Heart left ventricle (tissue), 16 donors: ENCODE measurements at regions of chr11 and their contacts with region 1.

Region 1: DNA sequence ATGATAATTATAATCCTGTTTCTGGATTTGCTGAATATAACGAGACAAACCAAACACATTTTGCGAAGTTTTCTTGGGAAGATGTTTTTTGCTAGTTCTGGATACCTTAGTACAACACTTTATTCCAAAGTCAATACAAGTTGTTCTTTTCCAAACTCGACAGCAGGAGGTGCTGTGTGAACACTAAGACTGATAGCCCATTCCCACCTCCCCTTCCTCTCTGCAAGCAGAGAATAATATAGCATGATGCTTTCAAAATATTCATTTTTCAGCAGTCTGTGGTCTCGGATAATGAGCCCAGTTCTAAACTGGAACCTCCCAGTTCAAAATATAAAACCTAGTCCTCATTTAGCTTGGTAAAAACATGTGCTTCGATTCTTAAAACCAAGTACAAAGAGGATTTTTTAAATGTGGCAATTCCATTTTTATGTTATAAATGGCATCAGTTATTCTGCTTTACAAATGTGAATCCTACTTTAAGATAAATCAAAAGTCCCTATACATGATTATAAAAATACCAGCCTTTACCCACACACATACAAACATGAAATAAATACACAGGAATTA is 129.1 kb downstream of the DCDC1 start:
- DNase-seq: no peak
- ATAC-seq: no peak
- H3K4me3 ChIP-seq: no peak overlapping the region
- H3K27ac ChIP-seq: no peak overlapping the region
- H3K4me1 ChIP-seq: no peaks in the 10 kb centered on the region
- H3K27me3 ChIP-seq: no peaks in the 10 kb centered on the region
- CTCF ChIP-seq: peak; percentile 22 to 63 (median 46)
- POLR2A ChIP-seq: no peak

Region 2: GRCh38 chr11:31351168-31351567 is 110.7 kb after region 1 on chr11:
- intact Hi-C with region 1: no loop called
- DNase-seq: no peak
- ATAC-seq: no peak
- H3K4me3 ChIP-seq: no peak overlapping the region
- H3K27ac ChIP-seq: no peak overlapping the region
- H3K4me1 ChIP-seq: no peaks in the 10 kb centered on the region
- H3K27me3 ChIP-seq: peaks cover 0 to 11% (median 0%) of the 10 kb centered on the region in 9 donors
- CTCF ChIP-seq: no peak
- POLR2A ChIP-seq: no peak

Region 3: GRCh38 chr11:31865606-31866300 is 625.3 kb after region 1 on chr11:
- intact Hi-C with region 1: loop called in 6 of 10 experiments (anchors 5 to 10 kb)
- DNase-seq: no peak
- ATAC-seq: no peak
- H3K4me3 ChIP-seq: no peak overlapping the region
- H3K27ac ChIP-seq: no peak overlapping the region
- H3K4me1 ChIP-seq: peaks cover 0 to 2% (median 0%) of the 10 kb centered on the region in 12 donors
- H3K27me3 ChIP-seq: peaks cover 0 to 47% (median 2%) of the 10 kb centered on the region in 9 donors
- CTCF ChIP-seq: no peak
- POLR2A ChIP-seq: no peak

Region 4: DNA sequence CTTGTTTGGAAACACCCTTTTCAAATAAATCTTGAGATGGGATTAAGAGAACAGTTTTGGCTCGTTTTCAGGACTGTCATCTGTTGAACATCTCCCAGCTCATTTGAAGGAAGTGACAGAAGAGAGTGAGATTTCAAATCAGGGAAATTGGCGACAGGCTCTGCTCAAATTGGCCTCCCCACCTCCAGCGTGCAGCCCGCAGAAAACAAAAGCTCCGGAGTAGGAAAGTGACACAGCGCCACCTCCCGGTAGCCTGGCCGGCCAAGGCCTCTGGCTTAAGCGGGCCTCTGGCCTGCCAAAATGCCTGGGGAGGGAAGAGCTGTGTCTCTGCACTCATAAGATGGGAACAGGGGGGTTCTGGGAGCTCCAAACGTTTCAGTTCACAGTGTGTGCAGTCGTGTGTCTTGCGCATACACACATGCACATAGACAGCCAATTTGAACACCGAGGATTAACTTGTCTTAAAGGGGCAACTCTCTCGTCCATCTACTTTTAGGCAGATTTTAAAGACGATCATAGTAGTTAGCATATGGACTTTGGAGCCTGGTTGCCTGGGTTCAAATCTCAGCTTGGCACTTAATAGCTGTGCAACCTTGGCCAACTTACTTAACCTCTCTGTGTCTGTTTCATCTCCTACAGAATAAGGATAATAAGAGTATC is 717.8 kb after region 1 on chr11:
- intact Hi-C with region 1: loop called in 1 of 10 experiments (anchors 5 kb)
- DNase-seq: peak; percentile 60 to 82 (median 63)
- ATAC-seq: peak; percentile 74 to 92 (median 81)
- H3K4me3 ChIP-seq: no peak overlapping the region
- H3K27ac ChIP-seq: no peak overlapping the region
- H3K4me1 ChIP-seq: peaks cover 0 to 5% (median 0%) of the 10 kb centered on the region in 12 donors
- H3K27me3 ChIP-seq: no peaks in the 10 kb centered on the region
- CTCF ChIP-seq: peak; percentile 64 to 86 (median 78)
- POLR2A ChIP-seq: no peak

Region 5: DNA sequence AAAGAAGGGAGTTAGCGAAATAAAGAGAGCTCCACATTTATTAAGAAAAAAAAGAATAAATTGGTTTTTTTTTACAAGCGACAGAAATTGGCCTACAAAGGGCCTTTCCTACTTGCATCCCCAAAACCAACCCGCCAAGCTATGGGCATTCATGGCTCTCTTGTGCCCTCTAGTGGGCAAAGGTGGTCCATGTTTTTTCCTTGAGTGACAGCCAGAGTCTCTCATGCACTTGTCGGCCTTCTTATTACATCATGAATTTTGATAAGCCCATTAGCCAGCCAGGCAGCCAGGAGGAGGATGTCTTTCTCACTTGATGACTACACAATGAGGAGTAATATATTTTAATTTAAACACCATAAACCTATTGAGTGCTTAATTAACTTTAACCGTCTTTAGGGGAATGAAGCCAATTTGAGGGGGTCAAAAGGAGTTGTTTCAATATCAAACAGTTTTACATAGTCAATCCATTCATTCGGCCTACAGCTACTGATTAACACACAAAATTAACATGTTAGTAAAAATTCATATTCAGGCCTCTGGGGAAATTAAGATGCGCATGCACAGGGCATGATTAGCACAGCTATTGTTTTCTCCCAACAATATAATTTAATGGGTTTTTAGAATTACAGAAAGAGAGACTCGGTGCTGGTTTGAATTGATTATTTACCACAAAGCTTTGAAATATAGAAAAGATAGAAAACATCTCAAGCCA is 936.0 kb after region 1 on chr11:
- intact Hi-C with region 1: loop called in 7 of 10 experiments (anchors 5 to 10 kb)
- DNase-seq: peak in 4 of 5 donors; percentile 54 to 70 (median 66)
- ATAC-seq: peak in 3 of 4 donors; percentile 62 to 78 (median 74)
- H3K4me3 ChIP-seq: no peak overlapping the region
- H3K27ac ChIP-seq: no peak overlapping the region
- H3K4me1 ChIP-seq: peaks cover 0 to 9% (median 0%) of the 10 kb centered on the region in 12 donors
- H3K27me3 ChIP-seq: peaks cover 0 to 7% (median 0%) of the 10 kb centered on the region in 9 donors
- CTCF ChIP-seq: peak; percentile 82 to 96 (median 88)
- POLR2A ChIP-seq: no peak